A549 (cell line): ENCODE measurements at regions of chr17 and their contacts with region 1.

Region 1: DNA sequence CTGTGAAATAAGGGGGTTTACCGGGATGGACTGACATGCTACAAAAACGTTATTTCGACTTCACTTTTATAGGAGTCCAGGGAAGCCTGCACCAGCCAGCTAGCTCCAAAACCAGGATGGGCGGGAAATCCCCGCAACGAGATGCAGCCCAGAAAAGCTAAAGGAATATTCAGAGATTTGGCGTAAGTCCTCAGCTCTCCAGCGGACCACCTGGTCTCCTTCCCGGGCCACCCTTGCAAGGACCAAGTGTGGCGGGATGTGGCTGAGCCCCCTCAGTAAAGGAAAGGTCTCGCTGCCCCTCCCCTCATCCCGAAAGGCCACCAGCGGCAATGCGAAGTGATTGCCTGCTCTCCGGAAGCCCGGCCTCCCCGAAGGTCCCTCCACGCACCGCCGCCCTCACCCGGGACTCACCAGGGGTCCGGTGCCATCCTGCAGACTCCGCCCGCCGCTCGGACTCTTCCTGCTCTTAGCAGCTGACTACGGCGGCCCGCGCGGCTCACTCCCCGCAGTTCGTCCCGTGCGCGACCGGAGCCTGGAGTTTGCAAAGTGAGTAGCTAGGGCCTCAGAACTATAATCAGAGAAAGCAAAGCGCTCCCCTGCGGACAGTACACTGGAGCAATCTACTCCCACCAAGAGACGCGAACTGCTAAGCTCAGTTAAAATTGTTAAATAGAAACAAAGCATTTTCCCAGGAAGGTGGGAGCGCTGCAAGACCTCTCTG is at the start of gene STX8:
- DNase-seq: peak; percentile 86 to 94
- ATAC-seq: peak; percentile 89 to 94
- H3K4me3 ChIP-seq: peak within 1 kb of the TSS; percentile 93
- H3K27ac ChIP-seq: peak within 1 kb of the TSS; percentile 88 to 90
- H3K4me1 ChIP-seq: peaks cover 15% of the 10 kb centered on the region
- CTCF ChIP-seq: no peak
- EP300 ChIP-seq: no peak
- POLR2A ChIP-seq: peak; percentile 83
- RAD21 ChIP-seq: 0 out of 5 replicates have a peak, but pooled peaks of 1 of the 2 experiments have one; percentile 16
- polyA plus RNA-seq, gene STX8: 155 and 168 TPM in 2 replicates

Region 2: GRCh38 chr17:9484789-9485188 is 90.8 kb before region 1 on chr17:
- CTCF ChIA-PET with region 1: no interaction called
- POLR2A ChIA-PET with region 1: no interaction called
- DNase-seq: no peak
- ATAC-seq: no peak
- H3K4me3 ChIP-seq: no peak overlapping the region
- H3K27ac ChIP-seq: no peak overlapping the region
- H3K4me1 ChIP-seq: no peaks in the 10 kb centered on the region
- CTCF ChIP-seq: no peak
- EP300 ChIP-seq: no peak
- POLR2A ChIP-seq: no peak
- RAD21 ChIP-seq: no peak

Region 3: GRCh38 chr17:9587969-9588656 is 12.6 kb after region 1 on chr17:
- CTCF ChIA-PET with region 1: interaction called, 35 read pairs
- POLR2A ChIA-PET with region 1: no interaction called
- DNase-seq: peak in 1 of 2 experiments; percentile 24
- ATAC-seq: no peak
- H3K4me3 ChIP-seq: no peak overlapping the region
- H3K27ac ChIP-seq: no peak overlapping the region
- H3K4me1 ChIP-seq: no peaks in the 10 kb centered on the region
- CTCF ChIP-seq: no peak
- EP300 ChIP-seq: no peak
- POLR2A ChIP-seq: no peak
- RAD21 ChIP-seq: no peak

Region 4: GRCh38 chr17:9676742-9677387 is 101.3 kb after region 1 on chr17:
- CTCF ChIA-PET with region 1: interaction called, 34 read pairs
- POLR2A ChIA-PET with region 1: no interaction called
- DNase-seq: peak; percentile 69 to 84
- ATAC-seq: peak; percentile 93 to 96
- H3K4me3 ChIP-seq: no peak overlapping the region
- H3K27ac ChIP-seq: peak overlapping the region; percentile 44 to 57; a peak in 5 of 6 replicates
- H3K4me1 ChIP-seq: peaks cover 17% of the 10 kb centered on the region
- CTCF ChIP-seq: no peak
- EP300 ChIP-seq: no peak
- POLR2A ChIP-seq: no peak
- RAD21 ChIP-seq: no peak

Region 5: DNA sequence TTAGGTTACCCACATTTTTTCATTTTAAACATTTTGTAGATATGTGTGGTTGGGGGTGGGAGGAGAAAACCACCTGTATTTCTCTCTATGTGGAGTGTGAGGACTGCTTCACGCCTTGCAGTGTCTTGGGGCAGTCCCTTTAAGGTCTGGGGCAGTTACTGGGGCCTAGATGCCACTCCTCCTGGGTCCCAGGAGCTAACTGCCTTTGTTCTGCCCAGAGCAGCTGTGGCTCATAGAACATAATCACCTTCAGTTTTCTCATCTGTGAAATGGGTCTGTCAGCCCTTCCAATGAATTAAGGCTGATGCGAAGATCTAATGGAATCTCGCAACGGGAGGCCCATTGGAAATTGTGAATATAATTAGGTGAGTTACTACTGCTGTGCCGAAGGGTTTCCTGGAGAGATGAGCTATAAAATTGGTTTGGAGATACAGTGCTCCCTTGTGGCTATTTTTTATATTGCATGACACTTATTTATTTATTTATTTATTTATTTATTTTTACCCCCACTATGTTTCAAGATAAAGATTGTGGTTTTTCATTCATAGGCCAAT is 192.9 kb after region 1 on chr17:
- CTCF ChIA-PET with region 1: interaction called, 17 read pairs
- POLR2A ChIA-PET with region 1: no interaction called
- DNase-seq: peak; percentile 55 to 60
- ATAC-seq: peak in 1 of 2 experiments; percentile 52; a peak in 3 of 6 replicates
- H3K4me3 ChIP-seq: no peak overlapping the region
- H3K27ac ChIP-seq: peak overlapping the region; percentile 43 to 72
- H3K4me1 ChIP-seq: peaks cover 14% of the 10 kb centered on the region; the same call in 2 of the 3 replicates
- CTCF ChIP-seq: peak; percentile 80
- EP300 ChIP-seq: no peak
- POLR2A ChIP-seq: no peak
- RAD21 ChIP-seq: peak; percentile 55 to 74